ENCODE measurements at regions of chr16 and their contacts with region 1.

Region 1: GRCh38 chr16:46689365-46690280 is at the start of gene ORC6:
- DNase-seq: peak; percentile 96
- H3K4me3 ChIP-seq: peak within 1 kb of the TSS; percentile 69 to 83
- H3K27ac ChIP-seq: peak within 1 kb of the TSS; percentile 93 to 99
- H3K4me1 ChIP-seq: peaks cover 18% of the 10 kb centered on the region in 2 experiments
- H3K27me3 ChIP-seq: no peaks in the 10 kb centered on the region
- CTCF ChIP-seq: peak; percentile 63
- EP300 ChIP-seq: no peak
- RAD21 ChIP-seq: peak; percentile 59
- polyA plus RNA-seq, gene ORC6: 17.4 and 20.2 TPM in 2 replicates

Region 2: DNA sequence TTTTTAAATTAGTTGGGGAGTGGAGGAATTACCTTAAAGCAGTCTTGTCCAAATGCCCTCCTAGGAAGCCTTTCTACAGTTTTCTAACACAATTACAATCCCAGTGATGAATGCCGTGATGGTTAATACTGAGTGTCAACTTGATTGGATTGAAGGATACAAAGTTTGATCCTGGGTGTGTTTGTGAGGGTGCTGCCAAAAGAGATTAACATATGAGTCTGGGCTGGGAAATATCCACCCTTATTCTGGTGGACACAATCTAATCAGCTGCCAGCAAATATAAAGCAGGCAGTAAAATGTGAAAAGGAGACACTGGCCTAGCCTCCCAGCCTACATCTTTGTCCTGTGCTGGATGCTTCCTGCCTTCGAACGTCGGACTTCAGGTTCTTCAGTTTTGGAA is 12.0 kb after region 1 on chr16:
- CTCF ChIA-PET with region 1: interaction called, 12 read pairs
- POLR2A ChIA-PET with region 1: no interaction called
- DNase-seq: no peak
- H3K4me3 ChIP-seq: no peak overlapping the region
- H3K27ac ChIP-seq: no peak overlapping the region
- H3K4me1 ChIP-seq: no peaks in the 10 kb centered on the region
- H3K27me3 ChIP-seq: no peaks in the 10 kb centered on the region
- CTCF ChIP-seq: no peak
- EP300 ChIP-seq: no peak
- RAD21 ChIP-seq: no peak

Region 3: GRCh38 chr16:46757339-46758050 is 67.9 kb after region 1 on chr16:
- CTCF ChIA-PET with region 1: interaction called, 18 read pairs
- POLR2A ChIA-PET with region 1: interaction called, 7 read pairs
- DNase-seq: peak; percentile 92
- H3K4me3 ChIP-seq: no peak overlapping the region
- H3K27ac ChIP-seq: peak overlapping the region in 1 of 2 experiments; percentile 23; a peak in 1 of 4 replicates
- H3K4me1 ChIP-seq: peaks cover 0 to 28% of the 10 kb centered on the region in 2 experiments; a peak in 1 of 4 replicates
- H3K27me3 ChIP-seq: no peaks in the 10 kb centered on the region
- CTCF ChIP-seq: no peak; the same call in 1 of the 2 replicates
- EP300 ChIP-seq: peak; percentile 7 to 99; a peak in 2 of 4 replicates
- RAD21 ChIP-seq: 0 out of 2 replicates have a peak, but pooled peaks have one; percentile 33

Region 4: DNA sequence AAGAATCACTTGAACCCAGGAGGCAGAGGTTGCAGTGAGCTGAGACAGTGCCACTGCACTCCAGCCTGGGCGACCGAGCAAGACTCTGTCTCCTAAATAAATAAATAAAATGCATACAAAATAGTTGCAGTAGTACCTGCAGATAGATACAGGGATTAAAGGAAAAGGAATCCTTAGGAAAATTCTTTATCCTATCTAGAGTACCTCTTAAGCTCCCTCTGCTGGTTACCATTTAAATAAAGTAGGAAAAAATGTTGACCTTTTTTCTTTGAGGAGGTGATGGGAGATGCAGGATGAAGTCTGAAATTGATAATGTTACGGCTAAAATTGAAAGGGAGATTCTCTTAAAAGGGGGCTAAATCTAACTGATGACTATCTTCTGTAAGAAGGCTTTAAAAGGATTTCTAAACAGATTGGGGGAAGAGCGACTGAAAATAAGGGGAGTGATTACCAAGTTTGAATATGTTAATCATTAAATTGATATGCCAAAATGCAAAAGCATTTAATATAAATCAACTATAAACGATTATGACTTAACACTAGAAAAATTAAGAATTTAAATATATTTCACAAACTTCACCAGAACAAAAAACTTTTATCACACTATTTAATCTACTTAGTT is 111.9 kb after region 1 on chr16:
- CTCF ChIA-PET with region 1: interaction called, 11 read pairs
- POLR2A ChIA-PET with region 1: interaction called, 3 read pairs
- DNase-seq: peak; percentile 44
- H3K4me3 ChIP-seq: no peak overlapping the region; a peak in 1 of 4 replicates
- H3K27ac ChIP-seq: no peak overlapping the region
- H3K4me1 ChIP-seq: no peaks in the 10 kb centered on the region; a peak in 1 of 4 replicates
- H3K27me3 ChIP-seq: no peaks in the 10 kb centered on the region
- CTCF ChIP-seq: peak; percentile 68
- EP300 ChIP-seq: no peak
- RAD21 ChIP-seq: peak; percentile 62